Activated CD4-positive, alpha-beta T cell treated with anti-CD3 and anti-CD28 coated beads, Interleukin-2, amount 10 ng/mL, durations not matched to agents 24 days and 14 days (primary cell): ENCODE measurements at regions of chr1 and their contacts with region 1.

Region 1: DNA sequence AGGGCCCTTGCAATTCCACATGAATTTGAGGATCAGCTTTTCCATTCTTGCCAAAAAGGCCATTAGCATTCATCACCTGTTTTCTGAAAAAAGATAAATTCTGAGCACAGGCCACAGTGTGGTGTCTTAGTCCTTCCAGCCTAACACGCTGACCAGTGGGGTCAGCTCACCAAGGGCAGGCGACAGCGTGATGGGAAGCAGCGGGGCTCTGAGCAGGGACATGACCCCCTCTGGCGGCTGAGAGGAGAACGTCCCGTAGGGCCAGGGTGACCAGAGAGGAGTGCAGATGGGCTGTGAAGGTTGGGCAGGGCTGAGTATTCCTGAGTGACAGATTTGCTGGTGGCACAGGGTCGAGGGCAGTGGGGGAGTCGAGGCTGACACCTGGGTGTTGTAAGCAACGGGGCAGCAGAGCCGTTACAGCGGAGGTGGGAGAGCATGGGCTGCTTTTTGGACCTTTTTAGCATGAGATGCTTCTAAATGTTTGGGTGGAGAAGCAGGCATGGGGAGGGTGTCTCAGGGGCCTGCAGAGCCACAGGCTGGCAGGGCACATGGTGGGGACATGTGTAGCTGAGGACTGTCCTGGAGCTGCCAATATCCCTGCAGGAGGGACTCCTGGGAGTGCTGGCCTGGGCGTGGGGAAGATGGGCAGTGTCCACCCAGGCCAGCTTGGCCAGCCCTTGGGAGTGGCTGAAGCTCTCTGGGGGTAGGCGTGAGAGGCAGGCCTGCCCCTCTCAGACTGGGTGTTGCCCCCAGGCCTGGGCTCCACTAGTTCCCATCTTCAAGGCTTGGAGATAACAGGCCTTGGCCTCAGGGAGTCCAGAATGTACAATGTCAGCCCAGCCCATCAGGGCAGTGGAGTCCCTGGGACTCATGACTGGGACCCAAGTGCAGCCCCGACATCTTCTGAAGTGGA is 8.6 kb upstream of the CALML6 start:
- DNase-seq: peak; percentile 92
- H3K4me3 Mint-ChIP-seq: peak overlapping the region; percentile 32
- H3K27ac Mint-ChIP-seq: peak overlapping the region; percentile 15
- H3K4me1 Mint-ChIP-seq: peaks cover 12% of the 10 kb centered on the region
- H3K27me3 Mint-ChIP-seq: peaks cover 1% of the 10 kb centered on the region

Region 2: GRCh38 chr1:1777950-1778662 is 128.3 kb before region 1 on chr1 and contains the start of gene NADK:
- intact Hi-C with region 1: loop called (anchors 2 kb)
- DNase-seq: peak; percentile 96
- H3K4me3 Mint-ChIP-seq: peak within 1 kb of the TSS; percentile 81
- H3K27ac Mint-ChIP-seq: peak within 1 kb of the TSS; percentile 91
- H3K4me1 Mint-ChIP-seq: peaks cover 53% of the 10 kb centered on the region
- H3K27me3 Mint-ChIP-seq: no peaks in the 10 kb centered on the region
- total RNA-seq, gene NADK: 91.3 and 94.5 TPM in 2 replicates

Region 3: GRCh38 chr1:1890506-1891348 is 15.7 kb before region 1 on chr1 and contains the start of gene GNB1:
- intact Hi-C with region 1: loop called (anchors 2 kb)
- DNase-seq: peak; percentile 98
- H3K4me3 Mint-ChIP-seq: peak within 1 kb of the TSS; percentile 90
- H3K27ac Mint-ChIP-seq: peak within 1 kb of the TSS; percentile 93
- H3K4me1 Mint-ChIP-seq: peaks cover 37% of the 10 kb centered on the region
- H3K27me3 Mint-ChIP-seq: peaks cover 3% of the 10 kb centered on the region
- total RNA-seq, gene GNB1: 403 and 422 TPM in 2 replicates

Region 4: DNA sequence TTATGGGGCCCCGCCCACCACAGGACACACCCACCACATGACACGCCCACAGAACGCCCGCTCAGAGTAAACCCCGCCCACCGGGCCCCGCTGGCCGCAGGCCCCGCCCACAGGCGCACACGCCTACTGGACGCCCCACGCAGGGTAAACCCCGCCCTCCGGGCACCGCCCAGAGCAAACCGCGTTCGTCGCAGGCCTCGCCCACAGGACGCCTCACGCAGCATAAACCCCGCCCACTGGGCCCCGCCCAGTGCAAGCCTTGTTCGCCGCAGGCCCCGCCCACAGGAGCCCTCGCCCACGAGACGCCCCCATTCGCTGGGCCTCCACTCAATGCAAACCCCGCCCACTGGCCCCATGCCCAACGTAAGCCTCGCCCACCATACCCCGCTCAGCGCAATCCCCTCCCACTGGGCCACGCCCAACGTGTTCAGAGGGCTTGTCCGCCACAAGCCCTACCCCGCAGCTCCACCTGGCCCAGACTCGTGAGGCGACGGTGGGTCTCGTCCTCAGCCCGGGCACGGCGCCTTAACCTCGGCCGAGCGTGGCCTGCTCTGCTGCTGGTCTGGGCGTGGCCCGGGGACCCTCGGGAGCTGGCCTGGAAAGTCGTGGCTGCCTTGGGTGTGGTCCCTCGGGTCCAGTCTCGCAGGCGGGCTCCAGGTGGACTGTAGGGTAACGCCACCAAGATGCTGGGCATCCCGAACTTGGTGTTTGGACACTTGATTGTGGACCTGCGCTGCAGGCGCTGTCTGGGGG is 13.0 kb after region 1 on chr1:
- intact Hi-C with region 1: loop called (anchors 1 kb)
- DNase-seq: peak; percentile 100
- H3K4me3 Mint-ChIP-seq: peak overlapping the region; percentile 79
- H3K27ac Mint-ChIP-seq: peak overlapping the region; percentile 70
- H3K4me1 Mint-ChIP-seq: peaks cover 3% of the 10 kb centered on the region
- H3K27me3 Mint-ChIP-seq: peaks cover 2% of the 10 kb centered on the region

Region 5: DNA sequence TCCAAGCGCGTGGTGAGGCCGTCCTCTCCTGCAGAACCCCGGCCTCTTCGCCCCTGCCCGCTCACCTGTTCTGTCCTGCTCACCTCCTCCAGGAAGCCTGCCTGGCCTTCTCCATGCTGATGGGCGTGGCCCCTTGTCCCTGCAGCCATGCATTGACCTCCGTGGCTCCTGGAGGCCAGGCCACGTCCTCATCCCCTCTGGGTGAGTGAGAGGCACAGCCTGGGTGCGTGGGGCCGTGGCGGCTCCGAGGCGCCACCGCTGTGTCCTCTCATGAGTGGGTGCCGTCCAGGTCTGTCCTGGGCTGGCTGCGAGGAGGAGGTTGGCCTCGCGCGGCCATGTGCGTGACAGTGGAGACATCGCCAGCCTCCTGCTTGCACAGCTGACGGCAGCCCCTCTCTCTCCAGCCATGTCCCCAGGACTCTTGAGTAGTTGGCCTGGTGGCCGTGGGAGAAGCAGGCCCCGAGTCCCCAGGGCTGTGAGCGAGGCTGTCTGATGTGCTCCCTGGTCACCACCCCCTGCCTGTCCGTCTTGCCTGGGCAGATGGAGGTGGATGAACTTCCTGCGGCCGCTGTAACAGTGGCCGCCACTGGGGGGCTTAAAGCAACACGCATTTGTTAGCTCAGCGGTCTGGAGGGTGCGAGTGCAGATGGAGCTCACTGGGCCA is 201.9 kb after region 1 on chr1:
- intact Hi-C with region 1: no loop called
- DNase-seq: no peak
- H3K4me3 Mint-ChIP-seq: no peak overlapping the region
- H3K27ac Mint-ChIP-seq: no peak overlapping the region
- H3K4me1 Mint-ChIP-seq: no peaks in the 10 kb centered on the region
- H3K27me3 Mint-ChIP-seq: no peaks in the 10 kb centered on the region